MCF 10A (cell line): ENCODE measurements at regions of chr5 and their contacts with region 1.

Region 1: GRCh38 chr5:145825751-145826180 is 9.4 kb downstream of the PRELID2 start:
- DNase-seq: peak; percentile 76
- H3K4me3 Mint-ChIP-seq: no peak overlapping the region
- H3K27ac Mint-ChIP-seq: no peak overlapping the region
- H3K4me1 Mint-ChIP-seq: peaks cover 26% of the 10 kb centered on the region
- H3K27me3 Mint-ChIP-seq: no peaks in the 10 kb centered on the region
- CTCF ChIP-seq: peak; percentile 97

Region 2: GRCh38 chr5:144203750-144204596 is 1621.8 kb before region 1 on chr5:
- CTCF ChIA-PET with region 1: interaction called, 21 read pairs
- POLR2A ChIA-PET with region 1: interaction called, 3 read pairs
- intact Hi-C with region 1: loop called (anchors 1 kb)
- DNase-seq: peak; percentile 83
- H3K4me3 Mint-ChIP-seq: peak overlapping the region; percentile 22
- H3K27ac Mint-ChIP-seq: no peak overlapping the region
- H3K4me1 Mint-ChIP-seq: peaks cover 15% of the 10 kb centered on the region
- H3K27me3 Mint-ChIP-seq: peaks cover 46% of the 10 kb centered on the region
- CTCF ChIP-seq: peak; percentile 92

Region 3: DNA sequence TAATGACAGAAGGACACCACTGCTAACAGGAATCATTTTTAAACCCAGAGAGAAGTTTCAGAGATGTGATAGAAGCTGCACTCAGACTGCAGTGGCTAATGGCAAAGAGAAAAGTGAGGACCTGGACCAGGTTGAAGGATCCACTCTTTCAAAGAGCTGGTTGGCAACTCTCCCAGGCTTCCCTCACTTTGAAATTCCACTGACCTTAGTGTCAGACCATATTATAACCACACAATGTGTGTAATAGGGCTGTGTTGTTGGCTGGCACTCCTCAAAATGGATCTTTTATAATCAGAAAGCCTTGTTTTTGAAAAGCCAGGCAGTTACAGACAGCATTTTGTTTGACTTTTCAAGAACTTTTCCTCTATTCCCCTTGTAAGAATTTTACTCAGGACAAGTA is 271.4 kb before region 1 on chr5:
- CTCF ChIA-PET with region 1: no interaction called
- POLR2A ChIA-PET with region 1: no interaction called
- intact Hi-C with region 1: no loop called
- DNase-seq: peak; percentile 74
- H3K4me3 Mint-ChIP-seq: no peak overlapping the region
- H3K27ac Mint-ChIP-seq: no peak overlapping the region
- H3K4me1 Mint-ChIP-seq: peaks cover 9% of the 10 kb centered on the region
- H3K27me3 Mint-ChIP-seq: no peaks in the 10 kb centered on the region
- CTCF ChIP-seq: no peak

Region 4: GRCh38 chr5:145673786-145674185 is 152.0 kb before region 1 on chr5:
- CTCF ChIA-PET with region 1: interaction called, 131 read pairs
- POLR2A ChIA-PET with region 1: no interaction called
- intact Hi-C with region 1: no loop called
- DNase-seq: no peak
- H3K4me3 Mint-ChIP-seq: no peak overlapping the region
- H3K27ac Mint-ChIP-seq: no peak overlapping the region
- H3K4me1 Mint-ChIP-seq: no peaks in the 10 kb centered on the region
- H3K27me3 Mint-ChIP-seq: no peaks in the 10 kb centered on the region
- CTCF ChIP-seq: no peak

Region 5: GRCh38 chr5:145775893-145776444 is 49.8 kb before region 1 on chr5:
- CTCF ChIA-PET with region 1: interaction called, 18 read pairs
- POLR2A ChIA-PET with region 1: no interaction called
- intact Hi-C with region 1: no loop called
- DNase-seq: peak; percentile 94
- H3K4me3 Mint-ChIP-seq: no peak overlapping the region
- H3K27ac Mint-ChIP-seq: peak overlapping the region; percentile 80
- H3K4me1 Mint-ChIP-seq: peaks cover 27% of the 10 kb centered on the region
- H3K27me3 Mint-ChIP-seq: no peaks in the 10 kb centered on the region
- CTCF ChIP-seq: no peak

Region 6: DNA sequence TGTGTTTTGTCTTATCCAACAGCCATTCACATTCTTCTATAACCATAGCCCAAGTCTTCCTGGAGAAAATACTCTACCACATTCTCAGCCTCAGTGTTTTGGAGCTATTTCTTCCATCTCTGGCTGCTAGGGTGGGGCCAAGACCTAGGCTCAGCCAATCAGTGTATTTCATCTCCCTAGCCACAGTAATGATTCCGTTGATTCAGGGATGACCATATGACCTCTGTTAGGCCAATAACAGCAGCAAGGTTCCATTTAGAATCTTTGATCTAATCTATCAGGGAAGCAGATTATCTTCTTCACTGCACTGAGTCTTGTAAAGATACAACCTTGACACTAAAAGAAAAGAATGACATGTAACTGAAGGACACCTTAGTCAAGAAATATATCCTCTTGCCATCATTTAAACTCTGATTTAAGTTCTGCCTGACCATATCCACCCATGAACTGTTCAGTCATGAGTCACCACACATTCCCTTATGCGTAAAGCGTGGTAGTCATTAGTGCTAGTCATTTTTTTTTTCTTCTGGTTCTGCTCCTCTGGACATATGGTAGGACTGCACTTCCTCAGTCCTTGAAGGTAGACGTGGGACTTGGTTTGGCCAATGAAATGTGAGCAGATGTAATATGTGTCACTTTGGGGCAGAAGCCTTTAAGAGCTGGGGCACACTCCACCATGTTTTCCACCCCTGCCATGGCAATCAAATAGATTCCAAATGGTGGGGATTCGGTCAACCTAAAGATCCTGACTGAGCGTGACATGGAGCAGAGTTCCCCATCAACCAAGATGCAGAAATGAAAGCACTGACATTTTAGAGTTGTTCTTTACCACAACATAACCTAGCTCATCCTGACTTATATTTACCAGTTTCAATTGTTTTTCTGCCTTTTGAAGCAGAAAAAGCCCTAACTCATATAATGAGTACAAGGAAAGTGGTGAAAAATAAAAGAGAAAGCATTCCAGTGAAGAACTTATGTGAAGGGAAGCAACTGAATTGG is 22.0 kb after region 1 on chr5:
- CTCF ChIA-PET with region 1: interaction called, 37 read pairs
- POLR2A ChIA-PET with region 1: interaction called, 3 read pairs
- intact Hi-C with region 1: no loop called
- DNase-seq: peak; percentile 68
- H3K4me3 Mint-ChIP-seq: no peak overlapping the region
- H3K27ac Mint-ChIP-seq: peak overlapping the region; percentile 18
- H3K4me1 Mint-ChIP-seq: peaks cover 21% of the 10 kb centered on the region
- H3K27me3 Mint-ChIP-seq: no peaks in the 10 kb centered on the region
- CTCF ChIP-seq: no peak

Region 7: GRCh38 chr5:145946112-145946861 is 120.5 kb after region 1 on chr5:
- CTCF ChIA-PET with region 1: interaction called, 14 read pairs
- POLR2A ChIA-PET with region 1: no interaction called
- intact Hi-C with region 1: no loop called
- DNase-seq: peak; percentile 72
- H3K4me3 Mint-ChIP-seq: no peak overlapping the region
- H3K27ac Mint-ChIP-seq: peak overlapping the region; percentile 32
- H3K4me1 Mint-ChIP-seq: peaks cover 61% of the 10 kb centered on the region
- H3K27me3 Mint-ChIP-seq: no peaks in the 10 kb centered on the region
- CTCF ChIP-seq: no peak